ENCODE measurements at regions of chr5 and their contacts with region 1.

Region 1: GRCh38 chr5:78008356-78008967 is 232.3 kb upstream of the TBCA start:
- DNase-seq: no peak
- ATAC-seq: peak in 2 of 4 donors; percentile 47 to 49
- H3K4me3 ChIP-seq: no peak overlapping the region
- H3K27ac ChIP-seq: no peak overlapping the region
- H3K4me1 ChIP-seq: peaks cover 0 to 13% (median 0%) of the 10 kb centered on the region in 12 donors
- H3K27me3 ChIP-seq: no peaks in the 10 kb centered on the region
- CTCF ChIP-seq: peak; percentile 53 to 78 (median 70)
- POLR2A ChIP-seq: no peak

Region 2: DNA sequence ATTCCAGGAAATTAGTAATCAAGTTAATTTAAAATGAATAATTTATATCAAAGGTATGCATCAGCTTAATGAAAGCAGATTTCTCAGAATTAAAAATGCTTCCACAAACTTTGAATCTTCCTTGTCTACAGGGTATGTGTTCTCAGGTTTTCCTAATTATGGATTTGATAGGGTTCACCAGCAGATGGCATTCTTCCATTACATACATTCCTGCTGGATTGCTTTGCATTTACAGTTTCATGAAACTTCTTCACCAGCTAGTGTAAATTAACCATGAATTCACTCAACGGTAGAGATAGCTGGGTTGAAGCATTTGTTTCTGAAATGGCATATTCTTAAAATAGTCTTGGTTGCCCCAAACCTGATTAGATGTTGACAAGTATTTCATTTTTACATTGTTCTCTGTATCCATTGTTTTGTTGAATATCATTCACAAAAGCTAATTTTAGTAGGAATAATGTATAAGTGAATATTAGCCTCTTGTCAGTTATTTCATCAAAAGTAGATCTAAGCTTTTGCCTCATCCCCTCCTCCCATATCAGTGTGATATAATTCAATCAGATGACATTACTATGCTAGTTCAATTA is 447.7 kb before region 1 on chr5:
- intact Hi-C with region 1: loop called in 6 of 10 experiments (anchors 2 to 10 kb)
- DNase-seq: no peak
- ATAC-seq: peak in 1 of 4 donors; percentile 33
- H3K4me3 ChIP-seq: no peak overlapping the region
- H3K27ac ChIP-seq: no peak overlapping the region
- H3K4me1 ChIP-seq: peaks cover 0 to 4% (median 0%) of the 10 kb centered on the region in 12 donors
- H3K27me3 ChIP-seq: peaks cover 0 to 7% (median 0%) of the 10 kb centered on the region in 9 donors
- CTCF ChIP-seq: peak; percentile 29 to 66 (median 42)
- POLR2A ChIP-seq: no peak

Region 3: DNA sequence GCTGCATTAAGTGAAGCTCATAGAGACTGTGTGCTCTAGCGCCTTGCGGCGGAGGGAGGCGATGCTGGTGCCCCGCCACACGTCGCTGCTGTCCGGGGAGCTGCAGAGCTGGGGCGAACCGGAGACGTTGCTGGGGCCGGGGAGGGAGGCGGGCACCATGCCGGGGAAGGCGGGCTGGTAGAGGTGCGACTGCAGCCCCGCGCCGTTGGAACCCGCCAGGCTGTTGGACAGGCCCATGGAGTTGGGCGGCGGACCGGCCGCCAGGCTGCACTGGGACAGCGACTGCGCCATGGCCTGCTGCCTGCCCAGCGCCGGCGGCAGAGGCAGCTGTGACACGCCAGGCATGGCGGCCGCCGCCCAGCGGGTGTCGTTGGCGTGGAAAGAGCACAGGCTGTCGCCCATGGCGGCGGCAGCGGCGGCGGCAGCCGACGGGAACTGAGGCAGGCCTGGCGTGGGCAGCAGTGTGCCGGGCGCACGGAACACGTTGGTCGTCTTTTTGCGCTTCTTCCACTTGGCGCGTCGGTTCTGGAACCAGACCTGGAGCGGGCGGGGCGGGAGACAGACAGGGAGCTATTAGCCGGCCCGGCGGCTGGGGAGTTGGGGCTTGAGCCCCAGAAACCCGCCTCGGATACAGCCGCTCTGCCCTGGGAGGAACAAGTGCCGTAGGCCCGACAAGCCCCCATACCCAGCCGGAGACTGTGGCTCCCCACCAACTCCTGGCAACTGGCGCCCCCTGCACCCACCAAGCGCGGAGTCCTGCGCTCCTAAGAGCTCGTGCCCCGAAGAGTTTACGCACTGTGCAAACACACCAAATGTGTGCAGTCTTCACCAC is 378.0 kb before region 1 on chr5:
- intact Hi-C with region 1: loop called in 1 of 10 experiments (anchors 5 kb)
- DNase-seq: peak in 2 of 5 donors; percentile 51 to 67
- ATAC-seq: peak; percentile 42 to 90 (median 80)
- H3K4me3 ChIP-seq: peak overlapping the region in 11 of 12 donors; percentile 23 to 58 (median 44)
- H3K27ac ChIP-seq: no peak overlapping the region
- H3K4me1 ChIP-seq: peaks cover 0 to 31% (median 12%) of the 10 kb centered on the region in 12 donors
- H3K27me3 ChIP-seq: peaks cover 73 to 100% (median 91%) of the 10 kb centered on the region in 9 donors
- CTCF ChIP-seq: peak in 1 of 12 donors; percentile 16
- POLR2A ChIP-seq: no peak

Region 4: DNA sequence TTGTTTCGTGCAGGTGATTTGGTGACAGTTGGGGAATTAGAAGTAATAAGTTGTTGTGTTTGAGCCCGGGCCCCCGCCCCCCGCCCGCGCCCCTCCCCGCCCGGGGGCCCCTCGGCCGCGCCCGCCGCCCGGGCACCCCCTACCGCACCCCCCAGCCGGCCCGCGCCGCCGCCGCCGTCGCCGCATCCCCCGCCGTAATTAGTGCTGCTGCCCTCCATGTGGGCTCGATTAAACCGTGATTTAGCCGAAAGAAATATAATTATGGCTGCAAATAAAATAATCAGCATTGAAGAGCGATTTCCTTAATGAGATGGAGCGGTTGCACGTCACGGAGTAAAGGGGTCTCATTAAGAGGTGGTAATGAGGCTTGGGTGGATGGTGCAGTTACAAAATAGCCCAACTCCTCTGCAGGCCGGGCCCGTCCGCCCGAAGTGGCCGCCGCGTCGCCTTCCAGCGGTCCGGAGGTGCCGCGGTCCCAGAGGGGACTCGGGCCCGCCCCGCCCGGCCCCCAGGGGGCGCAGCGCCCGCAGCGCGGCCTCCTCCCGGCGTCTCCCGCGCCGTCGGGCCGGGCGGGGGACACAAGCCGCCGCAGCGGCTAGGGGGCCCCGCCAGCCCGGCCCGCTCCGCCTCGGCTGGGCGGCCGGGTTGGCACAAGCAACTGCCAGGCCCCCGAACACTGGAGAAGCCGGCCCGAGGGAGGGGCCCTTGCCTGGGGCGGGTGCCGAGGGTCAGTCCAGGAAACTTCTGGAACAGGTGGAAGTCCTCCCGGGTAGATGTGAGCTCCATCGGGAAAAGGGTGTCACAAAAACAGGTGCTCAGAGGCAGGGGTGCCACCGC is 363.1 kb before region 1 on chr5:
- intact Hi-C with region 1: loop called (anchors 2 to 10 kb)
- DNase-seq: peak in 2 of 5 donors; percentile 28 to 69
- ATAC-seq: peak; percentile 32 to 84 (median 68)
- H3K4me3 ChIP-seq: peak overlapping the region in 6 of 12 donors; percentile 15 to 41 (median 31)
- H3K27ac ChIP-seq: no peak overlapping the region
- H3K4me1 ChIP-seq: peaks cover 0 to 38% (median 9%) of the 10 kb centered on the region in 12 donors
- H3K27me3 ChIP-seq: peaks cover 45 to 95% (median 71%) of the 10 kb centered on the region in 9 donors
- CTCF ChIP-seq: peak; percentile 20 to 84 (median 48)
- POLR2A ChIP-seq: no peak

Region 5: GRCh38 chr5:77650686-77651085 is 357.8 kb before region 1 on chr5:
- intact Hi-C with region 1: loop called (anchors 2 to 10 kb)
- DNase-seq: no peak
- ATAC-seq: no peak
- H3K4me3 ChIP-seq: no peak overlapping the region
- H3K27ac ChIP-seq: no peak overlapping the region
- H3K4me1 ChIP-seq: peaks cover 0 to 2% (median 0%) of the 10 kb centered on the region in 12 donors
- H3K27me3 ChIP-seq: peaks cover 0 to 69% (median 31%) of the 10 kb centered on the region in 9 donors
- CTCF ChIP-seq: no peak
- POLR2A ChIP-seq: no peak